ENCODE measurements at regions of chr12 and their contacts with region 1.

Region 1: DNA sequence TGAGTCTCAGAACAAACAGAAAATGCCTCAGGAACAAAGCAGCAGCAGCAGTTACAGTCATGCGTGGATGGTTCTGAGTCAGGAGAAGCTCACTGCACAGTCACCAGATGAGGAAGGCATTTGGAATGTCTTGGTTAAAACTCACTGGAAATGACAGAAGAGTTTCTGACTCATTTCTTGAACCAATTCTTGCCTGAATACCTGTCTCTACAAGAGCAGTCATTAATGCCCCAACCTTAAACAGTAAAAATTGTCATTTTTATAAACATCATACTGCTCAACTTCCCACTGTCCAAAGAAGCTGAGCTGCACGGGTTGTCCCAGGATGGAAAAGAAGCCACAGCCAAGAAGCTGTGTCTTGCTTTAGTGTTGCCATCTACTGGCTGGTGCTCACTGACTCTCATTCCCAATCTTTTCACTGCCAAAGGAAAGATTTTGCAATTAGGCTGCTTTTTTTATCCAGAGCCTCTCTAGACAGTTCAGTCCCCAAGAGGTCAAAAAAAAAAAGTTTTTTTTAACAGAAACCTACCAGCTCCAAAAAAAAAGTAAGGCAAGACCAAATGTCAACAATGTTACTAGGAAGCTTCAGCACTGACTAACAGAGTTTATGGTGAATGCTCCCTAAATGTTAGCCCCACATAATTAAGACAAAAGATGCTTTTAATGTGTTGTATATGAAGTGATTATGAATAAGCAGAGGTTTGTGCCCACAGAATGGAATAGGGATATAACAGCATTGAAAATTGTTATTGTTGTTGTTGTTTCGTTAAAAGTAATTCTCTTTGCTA is 40.4 kb downstream of the KICS2 start:
- DNase-seq: peak; percentile 99
- ATAC-seq: peak; percentile 87
- H3K4me3 ChIP-seq: peak overlapping the region; percentile 44; the same call in 1 of the 2 replicates
- H3K27ac ChIP-seq: peak overlapping the region; percentile 99
- H3K4me1 ChIP-seq: peaks cover 60% of the 10 kb centered on the region
- H3K27me3 ChIP-seq: no peaks in the 10 kb centered on the region
- CTCF ChIP-seq: peak; percentile 77

Region 2: GRCh38 chr12:64088431-64089349 is 93.0 kb before region 1 on chr12:
- CTCF ChIA-PET with region 1: no interaction called
- POLR2A ChIA-PET with region 1: no interaction called
- intact Hi-C with region 1: loop called (anchors 1 kb)
- DNase-seq: peak; percentile 98
- ATAC-seq: peak; percentile 96
- H3K4me3 ChIP-seq: peak overlapping the region; percentile 39
- H3K27ac ChIP-seq: peak overlapping the region; percentile 78
- H3K4me1 ChIP-seq: peaks cover 42% of the 10 kb centered on the region
- H3K27me3 ChIP-seq: no peaks in the 10 kb centered on the region
- CTCF ChIP-seq: no peak

Region 3: DNA sequence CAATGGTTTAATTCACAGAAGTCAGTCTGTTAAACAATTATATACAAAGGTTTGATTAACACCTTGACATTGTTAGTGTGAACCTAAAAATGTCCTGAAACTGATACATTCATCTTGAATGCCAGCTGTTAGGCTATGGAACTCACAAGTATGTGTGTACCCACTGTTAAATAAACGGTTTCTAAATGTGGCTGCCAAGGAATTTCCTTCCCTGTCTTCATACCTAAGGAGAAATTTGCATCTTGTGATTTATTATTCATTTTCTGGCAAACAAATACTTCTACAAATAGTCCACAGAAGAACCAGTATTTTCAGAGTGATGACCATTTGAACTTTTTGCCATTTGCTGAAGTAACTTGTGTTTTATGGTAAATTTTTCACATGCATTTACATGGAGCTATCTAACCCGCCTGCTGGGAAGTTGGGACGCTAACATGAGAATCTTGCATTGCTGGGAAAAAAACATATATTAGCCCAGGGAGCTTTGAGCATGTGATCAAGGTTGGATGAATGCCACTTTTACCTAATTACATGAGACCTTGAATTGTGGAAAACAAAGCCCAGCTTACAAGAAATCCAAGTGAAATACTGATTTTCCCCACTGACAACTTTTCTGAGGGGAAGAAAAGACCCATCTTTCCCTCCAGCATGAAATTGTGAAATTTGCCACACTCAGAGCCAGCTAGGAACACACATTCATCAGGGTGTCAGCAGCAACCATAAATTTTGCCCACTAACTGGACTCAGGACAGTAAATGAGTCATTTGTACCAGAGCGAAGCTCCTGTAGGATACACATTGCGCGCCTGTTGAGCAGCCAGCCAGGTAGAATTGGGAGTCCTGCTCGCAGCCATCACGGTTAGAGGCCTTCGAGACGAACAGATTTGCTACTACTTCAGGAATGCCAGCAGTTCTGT is 77.6 kb before region 1 on chr12:
- CTCF ChIA-PET with region 1: interaction called, 4 read pairs
- POLR2A ChIA-PET with region 1: interaction called, 3 read pairs
- intact Hi-C with region 1: loop called (anchors 5 kb)
- DNase-seq: peak; percentile 91
- ATAC-seq: peak; percentile 77
- H3K4me3 ChIP-seq: no peak overlapping the region
- H3K27ac ChIP-seq: peak overlapping the region; percentile 74
- H3K4me1 ChIP-seq: peaks cover 55% of the 10 kb centered on the region
- H3K27me3 ChIP-seq: no peaks in the 10 kb centered on the region
- CTCF ChIP-seq: no peak